Gastrocnemius medialis (tissue), 4 donors: ENCODE measurements at regions of chr3 and their contacts with region 1.

Region 1: DNA sequence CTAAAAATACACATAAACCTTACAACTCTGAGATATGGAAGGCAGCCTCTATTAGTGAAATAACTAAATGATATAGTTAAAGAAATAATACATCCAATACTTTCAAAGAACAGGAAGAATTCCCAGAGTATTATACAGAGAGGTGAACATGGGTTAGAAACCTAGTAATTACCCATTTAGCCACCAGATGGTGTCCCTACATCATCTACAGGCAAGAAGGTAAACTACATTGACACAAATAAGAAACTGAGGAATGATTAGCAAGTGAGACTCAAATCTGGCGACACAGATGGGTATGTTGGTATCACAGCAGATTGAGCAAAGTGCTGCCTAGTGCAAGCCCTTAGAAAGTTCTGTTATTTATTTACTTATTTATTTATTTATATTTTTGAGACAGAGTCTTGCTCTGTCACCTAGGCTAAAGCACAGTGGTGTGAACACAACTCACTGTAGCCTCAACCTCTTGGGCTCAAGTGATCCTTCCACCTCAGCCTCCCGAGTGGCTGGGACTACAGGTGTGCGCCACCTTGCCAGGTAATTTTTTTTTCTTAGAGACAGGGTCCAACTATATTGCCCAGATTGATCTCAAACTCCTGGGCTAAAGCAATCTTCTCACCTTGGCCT is 28.2 kb downstream of the NEK4 start:
- DNase-seq: no peak
- ATAC-seq: peak; percentile 56
- H3K4me3 ChIP-seq: no peak overlapping the region
- H3K27ac ChIP-seq: no peak overlapping the region
- H3K4me1 ChIP-seq: no peaks in the 10 kb centered on the region
- H3K27me3 ChIP-seq: no peaks in the 10 kb centered on the region
- CTCF ChIP-seq: peak; percentile 27 to 65 (median 55)
- POLR2A ChIP-seq: no peak

Region 2: GRCh38 chr3:52934630-52935530 is 192.3 kb after region 1 on chr3:
- in situ Hi-C with region 1: loop called in 3 of 4 experiments (anchors 10 to 25 kb)
- intact Hi-C with region 1: loop called (anchors 1 kb)
- DNase-seq: peak; percentile 31 to 35
- ATAC-seq: peak; percentile 84 to 94
- H3K4me3 ChIP-seq: no peak overlapping the region
- H3K27ac ChIP-seq: no peak overlapping the region
- H3K4me1 ChIP-seq: no peaks in the 10 kb centered on the region
- H3K27me3 ChIP-seq: no peaks in the 10 kb centered on the region
- CTCF ChIP-seq: peak; percentile 55 to 81 (median 68)
- POLR2A ChIP-seq: no peak

Region 3: DNA sequence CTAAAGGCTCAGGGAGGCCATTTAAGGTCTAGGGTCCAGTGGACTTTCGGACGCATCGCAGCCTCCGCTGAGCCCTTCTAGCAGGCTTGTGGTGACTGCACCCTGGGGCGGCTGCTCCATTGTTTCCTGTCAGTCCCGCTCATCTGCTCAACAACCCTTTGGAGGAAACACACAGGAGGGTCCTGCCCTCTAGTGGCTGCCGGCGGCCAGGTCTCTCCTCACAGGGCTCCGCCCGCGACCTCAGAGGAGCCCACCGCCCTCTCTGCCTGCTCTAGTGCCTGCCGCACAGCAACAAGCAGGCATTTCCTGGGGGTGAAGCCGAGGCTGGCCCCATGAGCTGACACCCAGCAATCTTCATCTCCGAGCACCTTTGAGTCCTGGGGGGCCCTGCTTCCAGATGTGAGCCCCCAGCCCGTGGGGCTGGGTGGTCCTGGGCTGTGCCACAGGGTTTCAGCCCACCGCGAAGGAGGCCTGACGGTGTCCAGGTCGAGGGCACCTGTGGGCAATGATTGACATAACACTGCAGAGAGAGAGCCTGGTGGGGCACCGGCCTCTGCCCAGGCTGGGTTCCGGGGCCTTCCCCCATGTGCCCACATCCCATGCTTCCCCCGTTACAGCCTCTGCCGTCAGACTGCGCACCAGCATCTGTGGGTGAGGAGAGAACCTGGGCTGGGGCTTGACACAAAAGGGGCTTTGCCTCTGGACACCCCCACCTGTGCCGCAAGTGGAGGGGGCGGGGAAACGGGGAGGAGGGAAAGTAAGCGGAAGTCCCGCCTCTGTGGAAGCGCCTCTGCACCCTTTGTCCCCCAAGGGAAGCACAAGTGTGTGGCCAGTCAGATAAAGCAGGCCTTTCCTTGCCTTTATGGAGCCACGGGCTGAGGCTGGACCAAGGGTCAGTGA is 330.4 kb after region 1 on chr3:
- in situ Hi-C with region 1: loop called in 2 of 4 experiments (anchors 10 to 25 kb)
- intact Hi-C with region 1: loop called (anchors 2 kb)
- DNase-seq: peak; percentile 50 to 70
- ATAC-seq: peak; percentile 86 to 93
- H3K4me3 ChIP-seq: peak overlapping the region; percentile 63 to 91 (median 70)
- H3K27ac ChIP-seq: peak overlapping the region; percentile 51 to 80 (median 64)
- H3K4me1 ChIP-seq: peaks cover 8 to 9% of the 10 kb centered on the region in 2 donors
- H3K27me3 ChIP-seq: no peaks in the 10 kb centered on the region
- CTCF ChIP-seq: peak; percentile 86 to 95 (median 93)
- POLR2A ChIP-seq: no peak

Region 4: DNA sequence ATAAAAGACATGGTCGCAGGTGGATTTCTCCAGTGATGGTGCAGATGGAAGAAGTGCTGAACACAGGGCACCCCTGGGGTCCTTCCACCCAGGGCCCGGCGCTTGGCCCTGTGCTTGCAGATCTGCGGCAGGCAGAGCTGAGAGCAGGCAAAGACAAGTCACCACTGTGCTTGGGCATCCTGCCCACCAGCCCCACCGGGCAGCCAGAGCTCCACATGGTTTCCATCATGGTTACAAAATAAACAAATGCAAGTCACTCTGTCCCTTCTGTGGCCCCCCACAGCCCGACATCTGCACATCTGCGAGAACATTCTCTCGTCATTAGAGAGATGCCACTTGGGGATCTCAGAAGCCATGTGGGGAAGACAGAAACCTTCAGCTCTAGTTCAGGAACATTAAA is 341.0 kb after region 1 on chr3:
- in situ Hi-C with region 1: loop called in 1 of 4 experiments (anchors 25 kb)
- intact Hi-C with region 1: no loop called
- DNase-seq: no peak
- ATAC-seq: no peak
- H3K4me3 ChIP-seq: no peak overlapping the region
- H3K27ac ChIP-seq: no peak overlapping the region
- H3K4me1 ChIP-seq: no peaks in the 10 kb centered on the region
- H3K27me3 ChIP-seq: no peaks in the 10 kb centered on the region
- CTCF ChIP-seq: no peak
- POLR2A ChIP-seq: no peak